ENCODE measurements at regions of chr12 and their contacts with region 1.

Region 1: GRCh38 chr12:53079226-53080117 is at the start of gene SPRYD3:
- DNase-seq: peak; percentile 98 to 99
- ATAC-seq: peak; percentile 100
- H3K4me3 ChIP-seq: peak within 1 kb of the TSS; percentile 79 to 92
- H3K27ac ChIP-seq: peak within 1 kb of the TSS; percentile 15 to 71
- H3K4me1 ChIP-seq: peaks cover 2% of the 10 kb centered on the region in 2 donors
- H3K27me3 ChIP-seq: no peaks in the 10 kb centered on the region
- total RNA-seq, gene SPRYD3: 71.6 to 101 TPM

Region 2: GRCh38 chr12:53054112-53054833 is 25.2 kb before region 1 on chr12:
- intact Hi-C with region 1: no loop called
- DNase-seq: peak; percentile 95 to 97
- ATAC-seq: peak; percentile 86
- H3K4me3 ChIP-seq: peak overlapping the region; percentile 17 to 35
- H3K27ac ChIP-seq: peak overlapping the region in 1 of 2 donors; percentile 81
- H3K4me1 ChIP-seq: no peaks in the 10 kb centered on the region
- H3K27me3 ChIP-seq: no peaks in the 10 kb centered on the region

Region 3: GRCh38 chr12:53098982-53099651 is 19.6 kb after region 1 on chr12:
- intact Hi-C with region 1: loop called in 1 of 2 experiments (anchors 2 kb)
- DNase-seq: peak; percentile 94 to 98
- ATAC-seq: peak; percentile 89
- H3K4me3 ChIP-seq: no peak overlapping the region
- H3K27ac ChIP-seq: peak overlapping the region; percentile 60 to 78
- H3K4me1 ChIP-seq: no peaks in the 10 kb centered on the region
- H3K27me3 ChIP-seq: no peaks in the 10 kb centered on the region